Panc1 (cell line): ENCODE measurements at regions of chr15 and their contacts with region 1.

Region 1: DNA sequence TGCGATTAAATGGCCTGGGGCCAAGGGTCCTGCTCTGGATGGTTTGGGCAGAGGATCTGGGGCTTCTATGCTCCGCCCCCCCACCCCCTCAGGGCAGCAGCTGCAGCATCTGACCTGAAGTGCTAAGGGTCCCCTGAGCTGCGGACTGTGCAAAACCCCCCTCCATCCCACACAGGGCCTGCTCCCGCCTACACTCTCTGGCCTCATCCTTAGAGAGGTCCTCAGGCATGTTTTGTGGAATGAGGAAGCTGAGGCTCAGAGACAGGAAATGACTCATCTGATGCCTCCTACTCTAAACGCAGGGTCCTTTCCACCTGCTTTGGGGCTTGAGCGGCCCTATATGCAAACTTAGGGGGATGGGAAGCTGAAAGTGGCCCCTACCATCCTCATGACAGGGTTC is 59.5 kb upstream of the CTSH start:
- DNase-seq: no peak
- ATAC-seq: peak; percentile 60
- H3K4me3 ChIP-seq: no peak overlapping the region
- H3K27ac ChIP-seq: peak overlapping the region; percentile 64
- H3K4me1 ChIP-seq: peaks cover 14% of the 10 kb centered on the region
- H3K27me3 ChIP-seq: no peaks in the 10 kb centered on the region
- CTCF ChIP-seq: no peak

Region 2: DNA sequence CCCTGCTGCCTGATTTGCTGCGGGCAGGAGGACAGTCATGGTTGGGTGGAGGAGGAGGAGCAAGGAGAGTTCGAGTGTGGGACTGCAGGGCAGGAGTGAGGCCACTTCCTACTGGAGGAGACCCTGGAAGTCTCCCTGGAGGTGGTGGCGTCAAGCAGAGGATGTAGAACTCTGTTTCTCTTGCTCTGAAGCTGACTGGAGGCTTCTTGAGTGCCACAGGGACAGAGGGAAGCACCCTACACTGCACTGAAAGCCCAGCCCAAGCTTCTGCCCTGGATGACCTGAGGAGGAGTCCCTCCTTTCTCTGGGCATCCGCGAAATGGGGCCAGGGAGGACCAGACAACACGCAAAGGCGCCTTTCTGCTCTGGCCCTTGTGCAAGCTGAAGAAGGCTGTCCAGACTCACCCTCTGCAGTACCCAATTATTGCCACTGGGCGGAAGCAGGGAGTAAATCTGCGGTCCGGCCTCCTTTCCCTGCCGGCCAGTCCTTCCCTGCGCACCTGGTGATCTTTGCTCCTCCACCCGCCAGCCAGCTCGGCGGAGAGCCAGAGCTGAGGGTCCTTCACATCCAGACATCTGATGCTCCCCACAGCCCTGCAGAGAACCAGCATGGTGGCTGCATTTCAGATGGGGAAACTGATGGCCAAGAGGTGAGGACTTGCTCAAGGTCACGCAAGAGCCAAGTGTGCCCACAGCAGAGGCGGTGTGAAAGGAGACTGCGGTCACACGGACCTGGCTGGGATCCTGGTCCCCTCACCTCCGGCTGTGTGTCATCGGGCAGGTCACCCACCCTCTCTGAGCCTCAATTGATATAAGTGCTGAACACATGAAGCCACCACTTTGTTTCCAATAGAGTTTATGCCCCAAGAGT is 1133.9 kb before region 1 on chr15:
- CTCF ChIA-PET with region 1: no interaction called
- POLR2A ChIA-PET with region 1: no interaction called
- in situ Hi-C with region 1: no loop called
- intact Hi-C with region 1: no loop called
- DNase-seq: peak; percentile 65
- ATAC-seq: peak; percentile 85
- H3K4me3 ChIP-seq: no peak overlapping the region
- H3K27ac ChIP-seq: no peak overlapping the region
- H3K4me1 ChIP-seq: peaks cover 14% of the 10 kb centered on the region
- H3K27me3 ChIP-seq: no peaks in the 10 kb centered on the region
- CTCF ChIP-seq: peak; percentile 89

Region 3: GRCh38 chr15:78750566-78750965 is 253.8 kb before region 1 on chr15:
- CTCF ChIA-PET with region 1: interaction called, 11 read pairs
- POLR2A ChIA-PET with region 1: no interaction called
- in situ Hi-C with region 1: no loop called
- intact Hi-C with region 1: no loop called
- DNase-seq: no peak
- ATAC-seq: peak; percentile 19; the same call in 1 of the 2 replicates
- H3K4me3 ChIP-seq: peak overlapping the region; percentile 13 to 39; a peak in 3 of 4 replicates
- H3K27ac ChIP-seq: no peak overlapping the region
- H3K4me1 ChIP-seq: no peaks in the 10 kb centered on the region
- H3K27me3 ChIP-seq: no peaks in the 10 kb centered on the region
- CTCF ChIP-seq: no peak

Region 4: DNA sequence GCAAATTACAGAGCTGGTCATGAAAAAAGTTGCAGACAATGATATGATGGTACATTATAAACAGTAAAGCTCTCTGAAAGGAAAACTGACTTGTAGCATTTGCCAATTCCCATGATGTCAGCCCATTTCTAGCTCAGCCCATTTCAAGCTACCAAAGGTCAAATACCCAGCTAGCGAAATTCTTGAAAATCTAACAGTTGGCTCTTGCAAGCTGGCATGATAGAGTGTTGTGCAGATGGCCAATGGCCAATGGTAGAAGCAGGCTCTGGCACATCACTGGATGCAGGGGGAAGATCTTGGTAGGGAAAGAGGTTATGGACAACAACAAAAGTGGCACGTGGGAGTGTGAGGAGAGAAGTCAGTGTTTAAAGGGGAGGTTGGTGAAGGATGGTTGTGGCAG is 49.6 kb after region 1 on chr15:
- CTCF ChIA-PET with region 1: no interaction called
- POLR2A ChIA-PET with region 1: no interaction called
- in situ Hi-C with region 1: no loop called
- intact Hi-C with region 1: no loop called
- DNase-seq: no peak
- ATAC-seq: no peak
- H3K4me3 ChIP-seq: no peak overlapping the region
- H3K27ac ChIP-seq: no peak overlapping the region
- H3K4me1 ChIP-seq: no peaks in the 10 kb centered on the region
- H3K27me3 ChIP-seq: no peaks in the 10 kb centered on the region; the same call in 1 of the 2 replicates
- CTCF ChIP-seq: no peak

Region 5: DNA sequence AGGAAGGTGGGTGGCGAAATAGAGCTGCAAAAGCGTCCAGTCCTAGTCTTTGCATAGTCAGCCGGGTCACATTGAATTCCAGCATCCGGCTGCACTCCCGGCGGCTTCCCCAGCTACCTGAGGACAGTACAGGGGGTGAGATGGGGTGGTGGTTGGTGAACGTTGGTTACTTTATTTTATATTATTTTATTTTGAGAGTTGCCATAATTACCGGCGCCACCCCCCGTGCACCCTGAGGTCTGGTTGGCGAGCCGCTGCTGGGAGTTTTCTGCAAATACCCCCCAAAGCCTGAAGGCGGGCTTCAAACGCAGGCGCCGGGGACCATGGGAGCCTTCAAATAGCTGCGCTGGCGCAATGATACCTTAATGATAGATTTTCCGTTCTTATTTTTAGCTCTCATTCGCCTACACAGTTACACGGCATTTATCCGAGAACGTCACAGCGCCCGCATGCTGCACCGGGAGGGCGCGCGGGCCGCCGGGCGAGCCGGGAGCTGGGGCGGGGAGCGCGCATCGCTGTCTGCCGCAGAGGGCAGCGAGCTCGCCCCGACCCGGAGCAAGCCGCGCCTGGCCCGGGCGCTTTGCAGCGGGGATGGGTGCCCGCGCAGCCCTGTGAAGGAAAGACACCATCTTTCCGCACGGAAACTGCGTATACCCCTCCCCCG is 87.0 kb after region 1 on chr15:
- CTCF ChIA-PET with region 1: no interaction called
- POLR2A ChIA-PET with region 1: no interaction called
- in situ Hi-C with region 1: no loop called
- intact Hi-C with region 1: no loop called
- DNase-seq: no peak
- ATAC-seq: peak; percentile 87
- H3K4me3 ChIP-seq: peak overlapping the region; percentile 35 to 44
- H3K27ac ChIP-seq: no peak overlapping the region
- H3K4me1 ChIP-seq: peaks cover 11% of the 10 kb centered on the region
- H3K27me3 ChIP-seq: peaks cover 14% of the 10 kb centered on the region
- CTCF ChIP-seq: no peak

Region 6: DNA sequence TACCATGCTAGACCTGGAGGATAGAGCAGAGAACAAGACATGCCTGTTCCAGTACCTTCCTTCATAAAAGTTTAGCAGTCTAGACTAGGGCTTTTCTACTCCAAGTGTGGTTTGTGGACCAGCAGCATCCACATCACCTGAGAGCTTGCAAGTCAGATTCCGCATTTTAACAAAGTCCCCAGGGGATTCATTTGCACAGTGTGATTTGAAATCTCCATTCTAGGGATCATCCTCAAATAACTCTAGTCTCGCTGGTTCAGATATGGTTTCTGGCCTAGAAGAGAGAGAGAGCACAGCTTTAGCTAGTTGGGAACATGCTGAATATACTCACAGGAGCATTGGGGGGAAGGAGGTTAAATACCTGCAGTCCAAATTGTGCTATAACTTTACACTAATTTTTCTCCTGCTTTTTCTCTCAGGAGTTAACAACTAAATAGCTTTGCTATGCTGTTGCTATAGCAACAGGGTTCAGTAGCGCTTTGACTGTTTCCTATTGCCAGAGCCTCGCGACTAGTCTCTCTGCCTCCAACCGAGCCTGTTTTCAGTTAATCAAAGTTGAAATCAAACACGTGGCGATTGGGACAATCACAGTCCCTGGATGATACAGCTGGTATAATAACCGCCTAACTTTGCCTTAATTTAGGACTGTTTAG is 150.3 kb after region 1 on chr15:
- CTCF ChIA-PET with region 1: interaction called, 13 read pairs
- POLR2A ChIA-PET with region 1: interaction called, 5 read pairs
- in situ Hi-C with region 1: no loop called
- intact Hi-C with region 1: no loop called
- DNase-seq: no peak
- ATAC-seq: no peak
- H3K4me3 ChIP-seq: no peak overlapping the region
- H3K27ac ChIP-seq: no peak overlapping the region
- H3K4me1 ChIP-seq: no peaks in the 10 kb centered on the region
- H3K27me3 ChIP-seq: no peaks in the 10 kb centered on the region
- CTCF ChIP-seq: no peak